ENCODE measurements at regions of chr9 and their contacts with region 1.

Region 1: GRCh38 chr9:112379177-112380101 is 469 bp upstream of the HSDL2 start:
- DNase-seq: peak; percentile 99
- H3K4me3 Mint-ChIP-seq: peak overlapping the region; percentile 100
- H3K27ac Mint-ChIP-seq: peak overlapping the region; percentile 99
- H3K4me1 Mint-ChIP-seq: peaks cover 39% of the 10 kb centered on the region
- H3K27me3 Mint-ChIP-seq: no peaks in the 10 kb centered on the region

Region 2: GRCh38 chr9:111631071-111631971 is 748.1 kb before region 1 on chr9 and contains the start of gene DNAJC25:
- CTCF ChIA-PET with region 1: no interaction called
- intact Hi-C with region 1: loop called (anchors 2 kb)
- DNase-seq: peak; percentile 97
- H3K4me3 Mint-ChIP-seq: peak within 1 kb of the TSS; percentile 92
- H3K27ac Mint-ChIP-seq: peak within 1 kb of the TSS; percentile 79
- H3K4me1 Mint-ChIP-seq: peaks cover 42% of the 10 kb centered on the region
- H3K27me3 Mint-ChIP-seq: no peaks in the 10 kb centered on the region
- total RNA-seq, gene DNAJC25: 3.4 to 3.9 TPM

Region 3: DNA sequence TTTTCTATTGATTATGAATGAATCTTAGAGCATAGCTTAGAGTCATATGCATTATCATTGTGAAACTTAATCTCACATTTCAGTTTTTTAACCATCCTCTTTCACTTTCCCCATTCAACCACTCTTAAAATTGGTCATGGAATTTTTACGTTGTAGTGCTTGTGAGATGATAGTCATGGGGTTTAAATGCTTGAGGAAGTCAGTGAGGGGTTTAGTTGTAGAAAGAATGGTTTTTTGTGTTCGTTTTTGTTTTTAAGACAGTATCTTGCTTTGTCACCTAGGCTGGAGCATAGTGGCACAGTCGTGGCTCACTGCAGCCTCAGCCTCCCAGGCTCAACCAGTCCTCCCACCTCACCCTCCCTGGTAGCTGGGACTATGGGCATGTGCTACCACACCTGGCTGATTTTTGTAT is 463.2 kb before region 1 on chr9:
- CTCF ChIA-PET with region 1: no interaction called
- intact Hi-C with region 1: loop called (anchors 1 kb)
- DNase-seq: peak; percentile 45
- H3K4me3 Mint-ChIP-seq: no peak overlapping the region
- H3K27ac Mint-ChIP-seq: peak overlapping the region; percentile 81
- H3K4me1 Mint-ChIP-seq: peaks cover 53% of the 10 kb centered on the region
- H3K27me3 Mint-ChIP-seq: no peaks in the 10 kb centered on the region

Region 4: DNA sequence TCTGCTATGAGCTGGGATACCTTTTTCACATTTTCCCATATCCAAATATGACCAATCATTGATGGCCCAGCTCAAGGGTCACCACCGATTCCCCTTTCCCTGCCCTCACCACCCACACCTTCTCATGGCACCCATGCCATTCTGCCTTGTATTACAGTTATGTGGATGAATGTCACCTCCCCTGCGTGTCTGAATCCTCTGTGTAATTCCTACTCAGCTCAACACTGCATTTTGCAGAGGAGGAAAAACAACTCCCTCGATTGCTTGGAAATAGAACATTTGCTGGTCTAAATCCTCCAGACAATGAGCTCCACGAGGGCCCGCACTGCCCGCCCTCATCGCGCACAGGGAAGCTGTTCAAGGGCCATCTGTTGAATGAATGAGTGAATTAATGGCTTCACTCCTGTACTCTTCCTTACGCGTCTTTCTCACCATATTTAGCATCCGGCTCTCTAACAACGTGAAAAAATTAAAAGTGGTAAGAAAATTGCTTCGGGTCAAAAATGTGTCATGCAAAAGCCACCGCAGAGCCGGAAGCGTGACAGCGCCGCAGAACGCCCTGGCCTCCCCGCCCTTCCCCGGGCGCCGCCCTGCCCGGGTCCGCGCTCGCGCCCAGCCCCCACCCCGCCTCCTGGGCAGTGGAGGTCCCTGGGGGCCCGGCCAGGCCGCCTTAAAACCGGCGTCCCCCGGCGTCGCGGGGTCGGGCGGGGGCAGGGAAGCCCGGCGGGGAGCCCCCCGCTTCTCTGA is 205.0 kb before region 1 on chr9:
- CTCF ChIA-PET with region 1: no interaction called
- intact Hi-C with region 1: loop called (anchors 2 kb)
- DNase-seq: peak; percentile 86
- H3K4me3 Mint-ChIP-seq: peak overlapping the region; percentile 82
- H3K27ac Mint-ChIP-seq: peak overlapping the region; percentile 79
- H3K4me1 Mint-ChIP-seq: peaks cover 30% of the 10 kb centered on the region
- H3K27me3 Mint-ChIP-seq: peaks cover 19% of the 10 kb centered on the region

Region 5: DNA sequence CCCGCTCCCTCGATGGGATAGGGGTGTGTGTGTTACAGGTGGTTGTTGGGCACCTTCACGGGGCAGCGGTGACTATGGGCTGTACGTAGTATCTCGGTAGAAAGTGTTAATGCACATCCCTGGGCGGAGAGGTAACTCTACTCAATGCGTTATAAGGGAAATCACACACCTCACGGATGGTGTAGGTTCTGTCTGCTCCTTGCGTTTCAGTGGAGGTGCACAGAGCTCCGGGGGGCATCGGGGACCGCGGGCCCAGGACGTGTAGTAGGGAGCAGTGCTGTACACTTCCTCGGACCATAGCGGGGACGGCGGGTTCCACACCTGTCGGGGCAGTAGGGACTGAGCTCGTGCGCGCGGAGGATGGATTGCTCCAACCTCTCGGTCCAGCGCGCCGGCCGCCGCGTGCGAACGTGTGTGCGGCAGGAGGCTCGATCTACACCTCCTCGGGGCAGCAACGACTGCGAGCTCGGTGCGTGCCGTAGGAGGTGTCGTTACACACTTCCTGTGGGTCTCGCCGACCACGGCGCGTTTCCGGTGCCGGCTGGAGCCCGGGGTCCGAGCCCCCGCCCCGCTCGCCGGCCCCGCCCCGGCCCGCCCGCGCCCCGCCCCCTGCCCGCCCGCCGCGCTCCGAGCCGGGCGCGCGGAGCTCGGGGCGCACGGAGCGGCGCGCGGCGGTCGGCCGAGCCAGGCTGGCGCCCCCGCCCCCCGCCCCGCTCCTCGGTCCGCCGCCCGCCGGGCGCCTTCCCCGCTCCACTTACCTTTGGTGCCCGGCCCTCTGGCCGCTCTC is 107.0 kb after region 1 on chr9 and contains the start of gene KIAA1958:
- CTCF ChIA-PET with region 1: interaction called, 3 read pairs
- intact Hi-C with region 1: loop called (anchors 1 kb)
- DNase-seq: peak; percentile 91
- H3K4me3 Mint-ChIP-seq: peak within 1 kb of the TSS; percentile 93
- H3K27ac Mint-ChIP-seq: peak within 1 kb of the TSS; percentile 88
- H3K4me1 Mint-ChIP-seq: peaks cover 34% of the 10 kb centered on the region
- H3K27me3 Mint-ChIP-seq: no peaks in the 10 kb centered on the region
- total RNA-seq, gene KIAA1958: 6.7 to 7.6 TPM

Region 6: DNA sequence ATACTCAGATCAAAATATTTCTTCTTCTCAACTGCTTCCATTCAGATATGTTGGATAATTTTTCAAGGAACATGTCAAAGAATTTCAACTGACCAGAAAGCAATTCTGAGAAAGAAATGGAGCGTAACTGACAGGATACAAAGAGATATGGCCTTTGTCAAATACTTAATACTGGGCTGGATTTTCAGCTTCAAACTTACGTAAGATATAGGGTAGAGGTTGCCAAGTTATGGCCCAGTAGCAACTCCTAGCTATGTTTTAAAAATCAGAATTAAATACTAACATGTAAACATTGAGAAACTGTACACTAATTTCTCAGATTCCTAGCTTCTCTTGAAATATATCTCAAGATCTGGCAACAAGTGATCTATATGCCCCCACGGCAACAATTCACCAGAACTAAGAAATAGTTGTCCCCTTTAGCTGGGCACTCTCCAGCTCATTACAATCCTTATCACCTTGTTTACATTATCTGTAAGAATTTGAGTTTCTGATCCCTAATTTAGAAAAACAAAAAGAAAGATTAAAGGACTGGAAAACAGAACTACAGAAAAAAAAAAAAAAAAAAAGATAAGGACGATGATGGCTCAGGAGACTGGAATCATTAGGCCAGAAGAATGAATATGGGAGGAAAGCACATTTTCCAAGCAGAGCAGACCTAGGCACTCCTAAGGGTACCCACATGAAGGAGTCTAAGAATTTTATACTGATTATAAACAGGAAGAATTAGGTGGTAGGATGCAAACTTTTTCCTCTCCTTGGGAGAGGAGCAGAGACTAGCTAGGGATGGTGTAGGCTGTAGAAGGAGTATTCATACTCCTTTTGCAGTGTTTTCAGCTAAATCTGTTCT is 315.5 kb after region 1 on chr9:
- CTCF ChIA-PET with region 1: no interaction called
- intact Hi-C with region 1: no loop called
- DNase-seq: no peak
- H3K4me3 Mint-ChIP-seq: no peak overlapping the region
- H3K27ac Mint-ChIP-seq: no peak overlapping the region
- H3K4me1 Mint-ChIP-seq: peaks cover 17% of the 10 kb centered on the region
- H3K27me3 Mint-ChIP-seq: no peaks in the 10 kb centered on the region

Region 7: DNA sequence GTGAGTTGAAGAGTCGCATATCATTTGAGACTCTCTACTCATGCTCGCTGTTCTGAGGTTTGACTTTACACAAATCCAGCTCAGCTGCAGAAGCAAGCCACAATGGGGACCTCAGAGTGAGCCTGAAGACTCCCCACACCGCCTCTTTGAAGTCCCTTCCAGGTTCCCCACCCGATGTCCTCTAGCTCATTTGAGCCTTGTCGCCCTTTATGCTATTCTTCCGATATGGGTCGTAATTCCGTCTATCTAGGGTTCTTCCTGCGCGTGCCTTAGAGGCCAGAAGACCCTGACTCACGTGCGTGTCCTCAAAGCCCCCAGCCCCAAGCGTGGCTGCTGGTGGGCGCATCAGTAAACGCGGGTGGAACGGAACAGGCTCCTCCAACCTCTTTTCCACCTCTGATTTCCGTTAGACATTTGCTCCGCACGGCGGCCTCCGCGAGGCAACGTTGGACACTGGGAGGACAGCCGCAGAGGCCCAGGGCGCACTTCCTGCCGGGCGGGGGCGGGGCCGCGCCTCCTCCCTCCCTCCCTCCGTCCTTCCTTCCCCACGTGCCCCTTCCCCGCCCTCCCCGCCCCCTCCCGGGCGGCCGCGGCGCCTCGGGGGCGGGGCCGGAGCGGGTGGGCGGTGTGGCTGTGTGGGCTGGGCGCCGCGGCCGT is 370.8 kb after region 1 on chr9 and contains the start of gene SNX30:
- CTCF ChIA-PET with region 1: no interaction called
- intact Hi-C with region 1: loop called (anchors 1 kb)
- DNase-seq: peak; percentile 84
- H3K4me3 Mint-ChIP-seq: peak within 1 kb of the TSS; percentile 81
- H3K27ac Mint-ChIP-seq: peak within 1 kb of the TSS; percentile 74
- H3K4me1 Mint-ChIP-seq: peaks cover 63% of the 10 kb centered on the region
- H3K27me3 Mint-ChIP-seq: no peaks in the 10 kb centered on the region
- total RNA-seq, gene SNX30: 4.1 to 4.6 TPM

Region 8: GRCh38 chr9:113221003-113221799 is 841.8 kb after region 1 on chr9 and contains the starts of genes FKBP15 and SLC31A1:
- CTCF ChIA-PET with region 1: no interaction called
- intact Hi-C with region 1: loop called (anchors 1 kb)
- DNase-seq: peak; percentile 98
- H3K4me3 Mint-ChIP-seq: peak within 1 kb of the TSS; percentile 95
- H3K27ac Mint-ChIP-seq: peak within 1 kb of the TSS; percentile 91
- H3K4me1 Mint-ChIP-seq: peaks cover 38% of the 10 kb centered on the region
- H3K27me3 Mint-ChIP-seq: no peaks in the 10 kb centered on the region
- total RNA-seq, gene FKBP15: 14.7 to 15.8 TPM
- total RNA-seq, gene SLC31A1: 8.1 to 8.2 TPM